ENCODE measurements at regions of chr4 and their contacts with region 1.

Region 1: GRCh38 chr4:123396307-123397143 is at the start of gene SPRY1:
- DNase-seq: peak; percentile 86
- H3K4me3 Mint-ChIP-seq: peak within 1 kb of the TSS; percentile 77
- H3K27ac Mint-ChIP-seq: peak within 1 kb of the TSS; percentile 42
- H3K4me1 Mint-ChIP-seq: peaks cover 26% of the 10 kb centered on the region
- H3K27me3 Mint-ChIP-seq: peaks cover 22% of the 10 kb centered on the region
- total RNA-seq, gene SPRY1: 11.1 to 14.0 TPM

Region 2: GRCh38 chr4:121800961-121801714 is 1595.4 kb before region 1 on chr4 and contains the start of gene EXOSC9:
- CTCF ChIA-PET with region 1: no interaction called
- POLR2A ChIA-PET with region 1: no interaction called
- intact Hi-C with region 1: loop called (anchors 10 kb)
- DNase-seq: peak; percentile 95
- H3K4me3 Mint-ChIP-seq: peak within 1 kb of the TSS; percentile 84
- H3K27ac Mint-ChIP-seq: peak within 1 kb of the TSS; percentile 94
- H3K4me1 Mint-ChIP-seq: peaks cover 45% of the 10 kb centered on the region
- H3K27me3 Mint-ChIP-seq: no peaks in the 10 kb centered on the region
- total RNA-seq, gene EXOSC9: 65.9 to 68.0 TPM

Region 3: DNA sequence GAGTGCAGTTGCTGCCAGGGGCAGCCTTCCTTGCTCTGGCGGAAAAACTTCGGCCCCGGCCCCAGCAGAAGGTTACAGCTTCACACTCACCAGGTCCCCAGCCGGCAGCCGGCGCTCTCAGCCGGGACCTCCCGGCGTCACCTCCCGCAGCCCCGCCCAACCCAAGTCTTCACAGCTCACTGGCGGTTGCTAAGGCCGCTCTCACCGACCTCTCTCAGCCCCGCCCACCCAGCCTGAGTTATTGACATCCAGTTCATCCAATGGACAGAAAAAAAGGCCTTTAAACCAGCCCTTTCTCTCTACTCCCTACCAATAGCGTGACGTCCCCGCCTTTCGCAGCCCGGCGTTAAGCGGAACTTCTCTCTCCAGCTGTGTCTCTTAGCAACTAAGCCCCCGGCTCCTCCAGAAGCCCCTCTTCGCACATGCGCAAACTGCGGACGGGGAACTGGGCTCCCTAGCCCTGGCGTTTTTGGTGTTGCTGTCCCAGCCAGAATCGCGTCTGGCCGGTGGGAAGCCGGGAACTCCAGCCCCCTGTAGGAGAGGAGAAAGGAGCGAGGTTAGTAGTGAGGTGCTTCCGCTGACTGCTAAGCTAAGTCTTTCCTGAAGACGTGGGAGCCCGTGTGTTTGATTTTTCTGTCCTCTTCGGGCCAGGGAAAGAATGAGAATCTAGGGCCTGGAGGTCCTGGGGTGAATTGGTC is 664.0 kb before region 1 on chr4 and contains the start of gene BBS12:
- CTCF ChIA-PET with region 1: no interaction called
- POLR2A ChIA-PET with region 1: no interaction called
- intact Hi-C with region 1: loop called (anchors 10 kb)
- DNase-seq: peak; percentile 100
- H3K4me3 Mint-ChIP-seq: peak within 1 kb of the TSS; percentile 87
- H3K27ac Mint-ChIP-seq: peak within 1 kb of the TSS; percentile 87
- H3K4me1 Mint-ChIP-seq: peaks cover 27% of the 10 kb centered on the region
- H3K27me3 Mint-ChIP-seq: no peaks in the 10 kb centered on the region
- total RNA-seq, gene BBS12: 3.7 to 4.3 TPM

Region 4: GRCh38 chr4:123421227-123421936 is 24.9 kb after region 1 on chr4:
- CTCF ChIA-PET with region 1: interaction called, 3 read pairs
- POLR2A ChIA-PET with region 1: interaction called, 9 read pairs
- intact Hi-C with region 1: loop called (anchors 1 kb)
- DNase-seq: no peak
- H3K4me3 Mint-ChIP-seq: peak overlapping the region; percentile 52
- H3K27ac Mint-ChIP-seq: peak overlapping the region; percentile 72
- H3K4me1 Mint-ChIP-seq: peaks cover 39% of the 10 kb centered on the region
- H3K27me3 Mint-ChIP-seq: peaks cover 1% of the 10 kb centered on the region

Region 5: DNA sequence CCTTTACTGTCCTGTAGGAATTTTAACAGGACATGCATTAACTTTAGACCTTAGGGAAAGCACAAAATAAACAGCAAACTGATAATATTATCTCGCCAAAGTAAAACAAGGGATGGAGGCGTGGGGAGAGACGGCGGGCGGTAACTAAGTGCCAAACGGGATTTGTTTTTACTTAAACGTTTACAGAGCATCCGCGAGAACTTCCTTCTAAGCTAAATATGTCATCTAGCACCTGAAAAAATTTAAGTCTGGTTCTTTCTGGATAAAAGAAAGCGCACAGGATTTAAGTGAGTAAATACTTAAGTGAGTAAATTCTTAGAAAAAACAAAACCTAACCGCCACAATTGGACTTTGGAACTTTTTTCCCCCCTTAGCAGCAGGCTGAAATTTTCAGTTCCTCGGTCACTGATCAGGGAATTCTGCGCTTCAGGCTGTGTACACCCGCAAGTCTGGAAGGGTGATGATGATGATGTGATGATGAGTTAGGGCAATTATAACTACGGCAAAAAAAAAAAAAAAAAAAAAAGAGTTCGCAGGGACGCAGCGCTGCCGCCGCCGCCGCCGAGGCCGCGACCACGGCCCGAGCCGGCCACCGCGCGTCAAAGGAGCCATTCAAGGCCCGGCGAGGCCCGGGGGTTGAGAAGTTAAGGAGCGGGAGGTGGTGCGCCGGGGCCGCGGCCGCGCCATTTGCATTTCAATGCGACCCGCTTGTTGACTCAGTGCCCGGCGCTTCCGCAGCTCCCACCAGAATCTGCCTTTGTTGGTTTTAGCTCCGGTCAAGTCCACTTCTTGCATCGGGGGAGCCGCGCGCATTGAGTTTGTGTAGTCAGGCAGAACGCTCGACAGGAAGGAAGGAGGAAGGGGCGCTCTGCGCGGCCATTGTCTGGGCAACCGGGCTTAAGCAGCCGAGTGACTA is 108.8 kb after region 1 on chr4:
- CTCF ChIA-PET with region 1: no interaction called
- POLR2A ChIA-PET with region 1: no interaction called
- intact Hi-C with region 1: loop called (anchors 1 kb)
- DNase-seq: peak; percentile 16
- H3K4me3 Mint-ChIP-seq: peak overlapping the region; percentile 60
- H3K27ac Mint-ChIP-seq: no peak overlapping the region
- H3K4me1 Mint-ChIP-seq: peaks cover 4% of the 10 kb centered on the region
- H3K27me3 Mint-ChIP-seq: peaks cover 30% of the 10 kb centered on the region

Region 6: GRCh38 chr4:123671633-123672404 is 275.3 kb after region 1 on chr4:
- CTCF ChIA-PET with region 1: no interaction called
- POLR2A ChIA-PET with region 1: no interaction called
- intact Hi-C with region 1: loop called (anchors 1 kb)
- DNase-seq: peak; percentile 55
- H3K4me3 Mint-ChIP-seq: no peak overlapping the region
- H3K27ac Mint-ChIP-seq: no peak overlapping the region
- H3K4me1 Mint-ChIP-seq: peaks cover 21% of the 10 kb centered on the region
- H3K27me3 Mint-ChIP-seq: peaks cover 42% of the 10 kb centered on the region